Ascending aorta (tissue), 2 donors: ENCODE measurements at regions of chr14 and their contacts with region 1.

Region 1: GRCh38 chr14:50667996-50668825 is at the start of gene SAV1:
- DNase-seq: peak in 1 of 2 donors; percentile 89
- H3K4me3 ChIP-seq: peak within 1 kb of the TSS; percentile 86 to 96
- H3K27ac ChIP-seq: peak within 1 kb of the TSS; percentile 99
- H3K4me1 ChIP-seq: peaks cover 4 to 15% of the 10 kb centered on the region in 2 donors
- H3K27me3 ChIP-seq: no peaks in the 10 kb centered on the region
- CTCF ChIP-seq: no peak
- total RNA-seq, gene SAV1: 61.7 TPM

Region 2: DNA sequence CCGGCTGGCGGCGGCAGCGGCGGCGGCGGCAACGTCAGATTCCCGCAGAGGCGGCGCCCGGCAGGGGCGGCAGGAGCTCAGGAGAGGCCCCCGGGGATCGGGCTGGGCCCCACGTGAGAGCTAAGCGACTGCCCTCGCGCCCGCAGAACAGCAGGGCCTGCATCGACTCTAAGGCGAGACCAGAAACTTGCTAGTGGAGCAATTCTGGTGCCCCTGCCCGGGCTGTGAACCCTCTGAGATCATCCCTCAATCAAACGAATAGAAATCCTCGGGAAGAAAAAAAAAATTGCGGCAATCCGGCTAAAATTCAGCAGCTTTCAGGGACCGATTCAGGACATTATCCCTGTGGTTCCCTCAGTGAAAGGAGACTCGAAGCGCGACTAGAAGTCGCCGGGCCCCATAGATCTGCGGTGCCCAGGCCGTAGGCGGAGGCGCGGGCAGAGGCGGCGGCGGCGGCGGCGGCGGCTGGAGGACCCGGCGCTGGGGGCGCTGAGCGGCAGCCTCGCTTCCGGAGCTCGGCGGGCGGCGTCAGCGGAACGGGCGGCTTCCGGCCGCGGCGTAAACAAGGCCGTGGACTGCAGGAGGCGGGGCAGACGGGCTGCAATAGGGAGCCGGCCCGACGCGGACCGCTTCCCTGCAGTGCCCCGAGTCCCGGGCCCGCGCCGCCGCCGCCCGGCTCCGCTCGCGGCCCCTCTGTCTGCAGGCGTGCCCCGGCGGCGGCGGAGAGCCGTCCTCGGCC is 900.5 kb before region 1 on chr14 and contains the start of gene KLHDC2:
- intact Hi-C with region 1: loop called (anchors 5 kb)
- DNase-seq: peak; percentile 50 to 93
- H3K4me3 ChIP-seq: peak within 1 kb of the TSS; percentile 83 to 94
- H3K27ac ChIP-seq: peak within 1 kb of the TSS; percentile 94 to 97
- H3K4me1 ChIP-seq: peaks cover 0 to 24% of the 10 kb centered on the region in 2 donors
- H3K27me3 ChIP-seq: no peaks in the 10 kb centered on the region
- CTCF ChIP-seq: peak in 2 of 3 experiments; percentile 21 to 29
- total RNA-seq, gene KLHDC2: 11.7 TPM

Region 3: GRCh38 chr14:50311975-50312733 is 356.1 kb before region 1 on chr14 and contains the starts of genes DMAC2L and L2HGDH:
- intact Hi-C with region 1: loop called (anchors 10 kb)
- DNase-seq: peak; percentile 71 to 95
- H3K4me3 ChIP-seq: peak within 1 kb of the TSS; percentile 67 to 90
- H3K27ac ChIP-seq: peak within 1 kb of the TSS; percentile 89 to 92
- H3K4me1 ChIP-seq: peaks cover 0 to 8% of the 10 kb centered on the region in 2 donors
- H3K27me3 ChIP-seq: no peaks in the 10 kb centered on the region
- CTCF ChIP-seq: no peak
- total RNA-seq, gene DMAC2L: 13.5 TPM
- total RNA-seq, gene L2HGDH: 1.5 TPM

Region 4: DNA sequence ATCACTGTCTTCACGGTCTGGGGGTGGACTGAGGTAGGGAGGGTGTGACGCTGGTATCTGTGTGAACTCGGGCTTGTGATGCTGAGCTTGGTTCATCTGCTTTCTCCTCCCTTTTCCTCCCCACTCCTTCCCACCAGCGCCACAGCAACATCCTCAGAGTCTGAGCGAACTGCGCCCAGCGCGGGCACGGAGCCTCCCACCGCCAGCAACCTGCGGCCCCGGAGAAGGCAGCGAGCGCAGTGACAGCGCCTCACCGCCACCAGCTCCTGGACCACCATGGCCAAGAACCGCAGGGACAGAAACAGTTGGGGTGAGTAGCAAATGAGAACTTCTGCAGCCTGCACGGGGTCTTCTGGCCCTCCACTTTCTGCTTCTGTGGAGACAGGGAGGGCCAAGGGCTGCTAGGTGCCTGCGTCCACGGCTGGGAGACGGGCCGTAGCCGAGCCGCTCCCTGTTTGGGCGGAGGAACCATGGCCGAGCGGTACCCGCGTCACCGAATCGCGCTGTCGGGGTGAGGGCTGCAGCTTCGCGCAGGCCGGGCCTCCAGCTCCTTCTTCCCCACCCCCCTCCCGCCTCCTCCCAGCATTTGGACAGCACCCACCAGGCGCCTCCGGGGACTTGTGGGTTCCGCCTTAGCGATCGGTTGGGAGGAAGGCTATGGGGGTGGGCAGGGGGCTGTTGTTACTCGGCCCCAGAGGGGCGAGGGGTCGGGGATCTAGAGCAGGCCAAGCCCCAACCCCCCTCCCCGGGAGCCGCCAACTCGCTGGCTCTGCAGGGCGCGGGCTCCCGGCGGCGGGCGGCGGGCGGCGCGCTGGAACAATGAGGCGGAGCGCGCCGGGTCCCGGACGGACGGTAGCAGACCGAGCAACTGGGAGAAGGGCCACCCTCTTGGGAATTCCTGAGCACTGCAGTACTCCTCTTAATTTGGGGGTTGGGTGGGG is 108.0 kb before region 1 on chr14 and contains the start of gene ATL1:
- intact Hi-C with region 1: loop called (anchors 5 kb)
- DNase-seq: peak; percentile 15 to 86
- H3K4me3 ChIP-seq: peak within 1 kb of the TSS; percentile 60 to 78
- H3K27ac ChIP-seq: peak within 1 kb of the TSS; percentile 91 to 93
- H3K4me1 ChIP-seq: peaks cover 0 to 8% of the 10 kb centered on the region in 2 donors
- H3K27me3 ChIP-seq: no peaks in the 10 kb centered on the region
- CTCF ChIP-seq: no peak
- total RNA-seq, gene ATL1: 1.2 TPM

Region 5: DNA sequence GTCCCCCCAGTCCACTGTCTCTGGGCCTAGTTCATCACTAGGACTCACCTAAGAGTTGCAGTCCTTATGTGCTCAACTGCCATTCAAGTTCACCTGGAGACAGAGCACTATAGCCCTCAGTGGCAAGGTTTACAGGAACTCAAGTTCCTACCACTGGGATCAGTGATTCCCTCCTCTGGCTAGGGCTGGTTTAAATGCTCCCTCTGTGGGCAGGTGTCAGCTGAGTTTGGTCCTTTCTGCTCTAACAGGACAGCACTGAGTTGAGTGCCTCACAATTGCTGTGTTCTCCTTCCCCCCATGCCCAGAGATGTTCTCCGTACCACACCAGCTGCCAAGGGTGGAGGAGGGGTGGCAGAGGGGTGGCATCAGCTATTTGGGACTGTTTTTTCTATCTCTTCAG is 20.7 kb after region 1 on chr14:
- intact Hi-C with region 1: no loop called
- DNase-seq: no peak
- H3K4me3 ChIP-seq: no peak overlapping the region
- H3K27ac ChIP-seq: no peak overlapping the region
- H3K4me1 ChIP-seq: no peaks in the 10 kb centered on the region
- H3K27me3 ChIP-seq: no peaks in the 10 kb centered on the region
- CTCF ChIP-seq: no peak

Region 6: DNA sequence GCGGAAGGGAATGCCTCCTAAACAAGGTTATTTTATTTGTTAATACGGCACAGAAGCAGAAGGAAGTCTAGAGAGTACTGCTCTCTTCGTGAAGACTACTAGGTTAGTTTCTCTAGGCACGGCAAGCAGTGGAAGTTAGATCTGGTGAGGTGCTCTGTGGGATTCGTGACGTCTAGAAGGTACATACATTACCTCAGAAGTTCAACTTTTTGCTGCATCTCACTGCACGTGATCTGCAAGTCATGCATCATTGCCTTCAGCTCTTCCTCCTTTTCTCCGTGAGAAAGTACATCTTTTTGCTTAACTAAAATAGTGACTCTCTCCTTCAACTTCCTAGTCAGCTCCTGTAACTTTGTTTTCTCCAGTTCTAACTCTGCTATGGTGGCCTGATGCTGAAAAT is 88.1 kb after region 1 on chr14:
- intact Hi-C with region 1: loop called (anchors 5 kb)
- DNase-seq: no peak
- H3K4me3 ChIP-seq: no peak overlapping the region
- H3K27ac ChIP-seq: no peak overlapping the region
- H3K4me1 ChIP-seq: peaks cover 0 to 12% of the 10 kb centered on the region in 2 donors
- H3K27me3 ChIP-seq: no peaks in the 10 kb centered on the region
- CTCF ChIP-seq: no peak

Region 7: DNA sequence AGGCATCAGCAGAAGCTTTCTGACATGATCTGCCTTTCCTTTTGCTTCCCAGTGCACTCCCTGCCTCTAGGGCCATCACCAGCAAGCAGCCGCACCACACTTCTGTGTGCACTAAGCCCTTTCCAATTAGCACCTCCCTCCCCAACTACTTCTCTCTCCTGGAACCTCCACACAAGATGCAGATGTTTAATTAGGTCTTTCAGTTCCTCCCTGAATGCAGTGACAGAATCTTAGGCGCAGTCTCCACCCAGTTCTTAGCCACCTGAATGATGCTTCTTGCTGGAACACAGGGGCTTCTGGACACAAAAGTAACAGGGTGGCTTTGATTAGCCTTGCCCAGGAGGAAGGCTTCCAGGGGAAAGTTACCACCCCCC is 129.8 kb after region 1 on chr14:
- intact Hi-C with region 1: no loop called
- DNase-seq: no peak
- H3K4me3 ChIP-seq: no peak overlapping the region
- H3K27ac ChIP-seq: no peak overlapping the region
- H3K4me1 ChIP-seq: no peaks in the 10 kb centered on the region
- H3K27me3 ChIP-seq: no peaks in the 10 kb centered on the region
- CTCF ChIP-seq: no peak

Region 8: GRCh38 chr14:50964595-50965390 is 296.6 kb after region 1 on chr14:
- intact Hi-C with region 1: loop called (anchors 5 kb)
- DNase-seq: peak in 1 of 2 donors; percentile 87
- H3K4me3 ChIP-seq: no peak overlapping the region
- H3K27ac ChIP-seq: peak overlapping the region in 1 of 2 donors; percentile 47
- H3K4me1 ChIP-seq: peaks cover 8 to 17% of the 10 kb centered on the region in 2 donors
- H3K27me3 ChIP-seq: no peaks in the 10 kb centered on the region
- CTCF ChIP-seq: no peak